AG04449 (cell line): ENCODE measurements at regions of chr2 and their contacts with region 1.

Region 1: DNA sequence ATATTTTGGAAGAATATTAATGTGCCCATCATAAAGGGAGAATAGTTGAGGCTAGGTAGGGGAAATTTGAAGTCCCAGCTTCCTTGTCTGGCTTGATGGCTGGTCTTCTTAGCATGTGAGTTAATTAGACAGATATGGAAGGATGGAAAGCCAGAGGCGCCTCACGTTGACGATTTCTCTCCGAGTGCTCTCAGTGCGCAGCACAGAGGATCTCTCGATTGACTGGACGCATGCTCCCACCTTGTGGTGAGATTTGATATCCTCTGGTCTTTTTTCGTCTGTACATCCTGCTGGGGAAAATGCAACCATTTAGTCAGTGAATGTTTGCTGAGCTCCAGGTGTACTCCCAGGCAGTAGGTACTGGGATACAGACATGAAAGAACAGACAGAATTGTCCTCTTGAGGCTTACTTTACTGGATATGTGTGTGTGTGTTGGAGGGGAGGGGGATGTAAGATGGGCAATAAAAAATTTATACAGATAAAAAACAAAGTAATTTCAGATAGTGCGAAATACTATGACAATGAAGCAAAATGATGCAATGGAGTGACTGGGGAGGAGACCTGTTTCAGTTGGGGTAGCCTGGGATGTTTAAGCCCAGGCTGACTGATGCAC is 66.9 kb upstream of the ZNG1B start:
- DNase-seq: peak; percentile 34
- H3K4me3 ChIP-seq: no peak overlapping the region
- CTCF ChIP-seq: peak; percentile 60

Region 2: GRCh38 chr2:113211226-113212105 is 159.1 kb before region 1 on chr2:
- CTCF ChIA-PET with region 1: interaction called, 198 read pairs
- POLR2A ChIA-PET with region 1: no interaction called
- DNase-seq: no peak
- H3K4me3 ChIP-seq: no peak overlapping the region
- CTCF ChIP-seq: no peak

Region 3: GRCh38 chr2:113248997-113249770 is 121.4 kb before region 1 on chr2:
- CTCF ChIA-PET with region 1: interaction called, 152 read pairs
- POLR2A ChIA-PET with region 1: no interaction called
- DNase-seq: no peak
- H3K4me3 ChIP-seq: no peak overlapping the region
- CTCF ChIP-seq: peak; percentile 91

Region 4: GRCh38 chr2:113337809-113338208 is 32.8 kb before region 1 on chr2:
- CTCF ChIA-PET with region 1: no interaction called
- POLR2A ChIA-PET with region 1: no interaction called
- DNase-seq: no peak
- H3K4me3 ChIP-seq: no peak overlapping the region
- CTCF ChIP-seq: no peak

Region 5: GRCh38 chr2:113357071-113357470 is 13.5 kb before region 1 on chr2:
- CTCF ChIA-PET with region 1: interaction called, 19 read pairs
- POLR2A ChIA-PET with region 1: no interaction called
- DNase-seq: no peak
- H3K4me3 ChIP-seq: no peak overlapping the region
- CTCF ChIP-seq: no peak

Region 6: GRCh38 chr2:114201781-114202180 is 831.2 kb after region 1 on chr2:
- CTCF ChIA-PET with region 1: no interaction called
- POLR2A ChIA-PET with region 1: no interaction called
- DNase-seq: no peak
- H3K4me3 ChIP-seq: no peak overlapping the region
- CTCF ChIP-seq: no peak